ENCODE measurements at regions of chrX and their contacts with region 1.

Region 1: DNA sequence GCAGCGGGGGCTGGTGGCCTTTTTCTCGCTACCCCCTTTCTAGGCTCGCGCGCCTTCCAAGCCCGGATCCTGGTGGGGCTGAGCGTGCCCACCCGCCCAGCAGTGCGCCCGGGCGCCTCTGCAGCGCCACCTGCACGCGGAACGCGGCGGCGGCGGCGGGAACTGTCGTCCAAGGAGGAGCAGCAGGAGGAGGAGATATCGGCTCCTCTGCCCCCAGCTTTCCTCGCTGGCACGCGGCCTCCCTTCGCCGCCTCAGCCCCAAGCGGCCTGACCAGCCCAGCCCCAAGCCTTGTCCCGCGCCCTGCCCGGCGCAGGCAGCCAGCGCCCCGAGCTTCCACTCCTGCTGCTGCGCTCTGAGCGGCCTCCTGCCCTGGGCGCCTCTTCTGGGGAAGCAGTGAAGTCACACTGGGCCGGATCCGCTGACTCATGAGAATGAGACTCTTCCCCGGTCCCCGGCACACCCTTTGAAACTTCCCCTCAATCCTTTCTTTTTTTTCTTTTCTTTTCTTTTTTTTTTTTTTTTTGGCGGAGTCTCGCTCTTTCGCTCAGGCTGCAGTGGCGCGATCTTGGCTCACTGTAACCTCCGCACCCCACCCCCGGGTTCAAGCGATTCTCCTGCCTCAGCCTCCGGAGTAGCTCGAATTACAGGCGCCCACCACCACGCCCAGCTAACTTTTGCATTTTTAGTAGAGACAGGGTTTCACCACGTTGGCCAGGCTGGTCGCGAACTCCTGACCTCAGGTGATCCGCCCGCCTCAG is 10.6 kb upstream of the ELF4 start:
- DNase-seq: peak; percentile 68 to 90
- H3K4me3 ChIP-seq: peak overlapping the region; percentile 33
- H3K4me1 ChIP-seq: peaks cover 7% of the 10 kb centered on the region
- H3K27me3 ChIP-seq: no peaks in the 10 kb centered on the region

Region 2: GRCh38 chrX:129793604-129794191 is 327.2 kb before region 1 on chrX:
- in situ Hi-C with region 1: no loop called
- DNase-seq: no peak
- H3K4me3 ChIP-seq: no peak overlapping the region
- H3K4me1 ChIP-seq: no peaks in the 10 kb centered on the region
- H3K27me3 ChIP-seq: no peaks in the 10 kb centered on the region

Region 3: DNA sequence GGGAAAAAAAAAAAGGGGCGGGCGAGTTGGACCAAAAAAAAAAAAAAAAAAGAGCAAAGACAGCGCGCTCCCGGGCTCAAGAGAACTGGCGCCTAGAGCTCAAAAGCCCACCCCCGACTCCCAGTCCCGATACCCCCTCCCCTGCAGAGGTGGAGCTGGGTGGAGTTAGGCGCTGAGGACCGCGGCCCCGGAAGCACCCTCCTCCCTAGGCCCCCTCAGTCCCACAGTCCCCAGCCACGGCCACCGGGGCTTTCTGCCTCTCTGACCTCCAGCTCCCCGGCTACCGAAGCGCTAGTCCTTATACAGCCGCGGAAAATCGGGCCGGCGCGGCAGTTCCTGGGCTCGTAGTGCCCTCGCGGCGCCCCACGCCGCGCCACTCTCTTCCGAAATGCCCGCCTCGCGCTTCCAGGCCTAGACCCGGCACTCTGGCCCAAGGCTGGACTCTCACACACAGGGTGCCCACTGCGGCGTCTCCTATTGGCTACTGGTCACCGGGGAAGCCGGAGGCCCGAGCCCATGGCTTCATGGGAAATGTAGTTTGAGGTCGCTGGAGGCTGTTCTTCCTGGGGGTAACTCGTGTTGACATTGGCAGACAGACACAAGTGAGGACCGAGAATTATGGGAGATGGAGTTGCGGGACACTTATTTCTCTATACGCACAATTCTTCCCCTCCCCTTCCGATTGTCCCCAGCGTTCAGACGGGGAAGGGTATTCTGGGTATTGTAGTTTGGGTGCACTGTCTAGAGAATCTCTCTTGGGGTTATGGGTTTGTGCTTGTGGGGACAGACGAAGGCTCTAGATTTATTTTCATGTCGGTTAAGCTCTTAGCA is 782.1 kb after region 1 on chrX and contains the start of gene ENOX2:
- in situ Hi-C with region 1: loop called (anchors 25 kb)
- DNase-seq: peak; percentile 96 to 99
- H3K4me3 ChIP-seq: peak within 1 kb of the TSS; percentile 80
- H3K4me1 ChIP-seq: peaks cover 6% of the 10 kb centered on the region
- H3K27me3 ChIP-seq: no peaks in the 10 kb centered on the region

Measured in HAP-1 (cell line).